HepG2 (cell line): ENCODE measurements at regions of chr6 and their contacts with region 1.

Region 1: GRCh38 chr6:86192123-86192522 is 549.4 kb upstream of the SYNCRIP start:
- DNase-seq: peak; percentile 11
- ATAC-seq: peak; percentile 84
- H3K4me3 ChIP-seq: no peak overlapping the region
- H3K27ac ChIP-seq: no peak overlapping the region
- H3K4me1 ChIP-seq: no peaks in the 10 kb centered on the region
- H3K27me3 ChIP-seq: no peaks in the 10 kb centered on the region
- CTCF ChIP-seq: peak; percentile 49
- EP300 ChIP-seq: no peak
- POLR2A ChIP-seq: no peak
- RAD21 ChIP-seq: no peak

Region 2: DNA sequence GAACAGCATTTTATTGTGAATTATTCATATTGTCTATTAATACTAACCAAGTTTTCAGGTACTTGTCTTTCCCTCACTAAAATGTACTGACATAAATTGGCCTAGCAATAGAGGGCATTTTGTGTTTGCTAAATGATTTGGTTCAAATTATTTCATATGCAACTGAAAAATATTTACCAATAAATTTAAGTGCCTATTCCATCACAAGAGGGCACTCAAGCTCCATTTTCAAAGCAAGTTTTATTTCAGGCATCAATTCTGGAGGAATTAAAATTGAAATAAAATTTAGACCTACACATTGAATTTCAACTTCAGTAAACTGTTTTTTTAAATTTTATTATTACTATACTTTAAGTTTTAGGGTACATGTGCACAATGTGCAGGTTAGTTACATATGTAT is 435.1 kb before region 1 on chr6:
- CTCF ChIA-PET with region 1: no interaction called
- POLR2A ChIA-PET with region 1: no interaction called
- in situ Hi-C with region 1: loop called (anchors 25 kb)
- intact Hi-C with region 1: no loop called
- DNase-seq: no peak
- ATAC-seq: no peak
- H3K4me3 ChIP-seq: no peak overlapping the region
- H3K27ac ChIP-seq: no peak overlapping the region
- H3K4me1 ChIP-seq: peaks cover 8% of the 10 kb centered on the region; the same call in 1 of the 2 replicates
- H3K27me3 ChIP-seq: peaks cover 0 to under 1% of the 10 kb centered on the region in 2 experiments; a peak in 2 of 5 replicates
- CTCF ChIP-seq: peak; percentile 26
- EP300 ChIP-seq: no peak
- POLR2A ChIP-seq: no peak
- RAD21 ChIP-seq: no peak

Region 3: GRCh38 chr6:85911067-85911466 is 281.1 kb before region 1 on chr6:
- CTCF ChIA-PET with region 1: no interaction called
- POLR2A ChIA-PET with region 1: no interaction called
- in situ Hi-C with region 1: loop called (anchors 10 kb)
- intact Hi-C with region 1: no loop called
- DNase-seq: no peak
- ATAC-seq: peak; percentile 32; the same call in 1 of the 3 replicates
- H3K4me3 ChIP-seq: no peak overlapping the region
- H3K27ac ChIP-seq: no peak overlapping the region
- H3K4me1 ChIP-seq: no peaks in the 10 kb centered on the region
- H3K27me3 ChIP-seq: no peaks in the 10 kb centered on the region; a peak in 1 of 5 replicates
- CTCF ChIP-seq: no peak
- EP300 ChIP-seq: no peak
- POLR2A ChIP-seq: no peak
- RAD21 ChIP-seq: no peak

Region 4: DNA sequence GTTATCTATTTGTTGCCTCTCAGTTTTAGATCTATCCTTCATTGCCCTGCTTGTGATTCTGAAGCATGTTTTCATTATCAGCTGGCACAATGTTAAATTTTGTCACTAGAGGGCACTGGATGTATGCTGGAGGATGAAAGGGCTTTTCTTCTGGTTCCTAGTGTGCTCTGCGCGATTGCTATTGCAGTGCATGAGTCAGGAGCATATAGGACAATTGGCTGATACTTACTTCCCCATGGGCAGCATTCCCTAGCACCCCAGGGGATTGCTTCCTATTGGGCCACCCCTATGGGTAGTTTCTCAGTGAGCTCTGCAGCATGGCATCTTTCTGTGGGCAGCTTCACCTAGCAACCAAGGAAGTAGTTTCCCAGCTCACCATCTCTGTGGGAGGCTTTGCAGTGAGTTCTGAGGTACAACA is 269.1 kb before region 1 on chr6:
- CTCF ChIA-PET with region 1: interaction called, 8 read pairs
- POLR2A ChIA-PET with region 1: no interaction called
- in situ Hi-C with region 1: loop called (anchors 10 kb)
- intact Hi-C with region 1: loop called (anchors 1 kb)
- DNase-seq: peak; percentile 41
- ATAC-seq: peak; percentile 94
- H3K4me3 ChIP-seq: no peak overlapping the region
- H3K27ac ChIP-seq: no peak overlapping the region
- H3K4me1 ChIP-seq: no peaks in the 10 kb centered on the region
- H3K27me3 ChIP-seq: no peaks in the 10 kb centered on the region
- CTCF ChIP-seq: peak; percentile 83
- EP300 ChIP-seq: no peak
- POLR2A ChIP-seq: no peak
- RAD21 ChIP-seq: peak; percentile 60